ENCODE measurements at regions of chr2 and their contacts with region 1.

Region 1: GRCh38 chr2:207473049-207473930 is 56.5 kb upstream of the CREB1 start:
- DNase-seq: peak in 1 of 2 experiments; percentile 77
- ATAC-seq: peak; percentile 79 to 84
- H3K4me3 ChIP-seq: peak overlapping the region; percentile 24; the same call in 2 of the 3 replicates
- H3K27ac ChIP-seq: peak overlapping the region; percentile 70 to 81
- H3K4me1 ChIP-seq: peaks cover 19% of the 10 kb centered on the region
- CTCF ChIP-seq: peak; percentile 91
- EP300 ChIP-seq: no peak
- POLR2A ChIP-seq: no peak
- RAD21 ChIP-seq: peak; percentile 98

Region 2: GRCh38 chr2:206800506-206801417 is 672.5 kb before region 1 on chr2:
- CTCF ChIA-PET with region 1: interaction called, 44 read pairs
- POLR2A ChIA-PET with region 1: no interaction called
- DNase-seq: peak; percentile 38 to 72
- ATAC-seq: peak; percentile 83 to 90
- H3K4me3 ChIP-seq: no peak overlapping the region
- H3K27ac ChIP-seq: no peak overlapping the region
- H3K4me1 ChIP-seq: no peaks in the 10 kb centered on the region
- CTCF ChIP-seq: peak; percentile 86
- EP300 ChIP-seq: no peak
- POLR2A ChIP-seq: no peak
- RAD21 ChIP-seq: peak; percentile 93

Region 3: GRCh38 chr2:206981739-206982340 is 491.4 kb before region 1 on chr2:
- CTCF ChIA-PET with region 1: interaction called, 63 read pairs
- POLR2A ChIA-PET with region 1: no interaction called
- DNase-seq: peak; percentile 22 to 62
- ATAC-seq: peak; percentile 94 to 97
- H3K4me3 ChIP-seq: no peak overlapping the region
- H3K27ac ChIP-seq: peak overlapping the region in 1 of 2 experiments; percentile 20; a peak in 1 of 6 replicates
- H3K4me1 ChIP-seq: peaks cover 15% of the 10 kb centered on the region; the same call in 2 of the 3 replicates
- CTCF ChIP-seq: peak; percentile 88
- EP300 ChIP-seq: no peak
- POLR2A ChIP-seq: no peak
- RAD21 ChIP-seq: peak; percentile 95 to 96

Region 4: GRCh38 chr2:207148020-207148419 is 325.3 kb before region 1 on chr2:
- CTCF ChIA-PET with region 1: interaction called, 10 read pairs
- POLR2A ChIA-PET with region 1: no interaction called
- DNase-seq: no peak
- ATAC-seq: 0 out of 6 replicates have a peak, but pooled peaks of 1 of the 2 experiments have one; percentile 4
- H3K4me3 ChIP-seq: no peak overlapping the region
- H3K27ac ChIP-seq: peak overlapping the region in 1 of 2 experiments; percentile 6; a peak in 1 of 6 replicates
- H3K4me1 ChIP-seq: peaks cover 80% of the 10 kb centered on the region
- CTCF ChIP-seq: no peak
- EP300 ChIP-seq: no peak
- POLR2A ChIP-seq: no peak
- RAD21 ChIP-seq: no peak

Region 5: GRCh38 chr2:207258263-207258991 is 214.9 kb before region 1 on chr2:
- CTCF ChIA-PET with region 1: interaction called, 10 read pairs
- POLR2A ChIA-PET with region 1: interaction called, 9 read pairs
- DNase-seq: peak; percentile 66 to 97
- ATAC-seq: peak; percentile 92 to 93
- H3K4me3 ChIP-seq: peak overlapping the region; percentile 10; the same call in 1 of the 3 replicates
- H3K27ac ChIP-seq: peak overlapping the region; percentile 89 to 96
- H3K4me1 ChIP-seq: peaks cover 76% of the 10 kb centered on the region
- CTCF ChIP-seq: no peak
- EP300 ChIP-seq: peak; percentile 46 to 80; a peak in 3 of 5 replicates
- POLR2A ChIP-seq: no peak
- RAD21 ChIP-seq: peak in 1 of 2 experiments; percentile 62

Region 6: GRCh38 chr2:207459990-207460757 is 13.1 kb before region 1 on chr2:
- CTCF ChIA-PET with region 1: interaction called, 14 read pairs
- POLR2A ChIA-PET with region 1: no interaction called
- DNase-seq: no peak
- ATAC-seq: no peak
- H3K4me3 ChIP-seq: no peak overlapping the region
- H3K27ac ChIP-seq: no peak overlapping the region
- H3K4me1 ChIP-seq: no peaks in the 10 kb centered on the region
- CTCF ChIP-seq: no peak
- EP300 ChIP-seq: no peak
- POLR2A ChIP-seq: no peak
- RAD21 ChIP-seq: no peak

Region 7: DNA sequence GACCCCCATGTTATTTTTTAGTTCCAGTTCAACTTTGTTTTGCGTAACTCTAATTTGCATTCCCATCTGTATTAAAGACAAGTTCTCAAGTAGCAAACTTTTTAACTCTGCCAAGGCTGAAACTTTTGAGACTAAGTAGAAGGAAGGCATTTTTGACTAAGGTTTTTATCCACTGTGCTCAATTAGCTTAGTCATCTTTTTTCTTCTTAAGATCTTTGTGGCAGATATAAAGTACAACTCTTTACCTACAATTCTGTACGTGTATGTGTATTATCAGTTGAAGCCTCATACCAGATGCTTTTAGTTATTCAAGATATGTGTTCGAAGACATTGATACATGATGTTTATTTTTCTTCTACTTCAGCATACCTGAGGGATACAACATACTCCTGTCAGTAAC is 98.1 kb after region 1 on chr2:
- CTCF ChIA-PET with region 1: no interaction called
- POLR2A ChIA-PET with region 1: no interaction called
- DNase-seq: no peak
- ATAC-seq: no peak
- H3K4me3 ChIP-seq: no peak overlapping the region
- H3K27ac ChIP-seq: no peak overlapping the region
- H3K4me1 ChIP-seq: no peaks in the 10 kb centered on the region
- CTCF ChIP-seq: no peak
- EP300 ChIP-seq: no peak
- POLR2A ChIP-seq: no peak
- RAD21 ChIP-seq: no peak